MCF 10A (cell line): ENCODE measurements at regions of chr6 and their contacts with region 1.

Region 1: DNA sequence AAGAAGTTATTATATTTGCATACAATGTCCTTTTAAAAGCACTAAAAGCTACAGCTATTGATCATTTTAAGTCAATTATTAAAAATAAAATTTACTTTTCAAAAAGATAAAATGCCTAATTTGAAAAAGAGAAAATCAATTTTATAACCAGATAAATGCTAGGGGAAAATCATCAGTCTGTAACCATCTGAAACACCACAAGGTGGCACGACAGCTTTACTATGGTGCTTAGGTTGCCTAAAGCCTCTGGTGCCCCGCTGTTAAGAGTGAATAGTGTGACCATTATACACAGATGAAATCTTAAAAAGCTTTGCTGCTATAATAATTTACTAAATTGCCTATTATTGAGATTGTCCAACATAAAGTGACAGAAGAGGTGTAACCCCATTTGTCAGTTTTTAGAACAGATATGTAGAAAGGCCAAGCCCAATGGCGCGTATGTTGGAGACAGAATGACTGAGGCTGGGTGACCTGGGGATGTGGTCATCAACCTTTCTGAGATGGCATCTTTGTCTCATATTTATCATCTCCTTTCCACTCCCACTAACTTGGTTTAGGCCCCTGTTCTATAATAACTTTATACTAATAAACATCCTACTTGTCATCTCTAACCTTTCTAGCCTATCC is 100.8 kb downstream of the MOXD1 start:
- DNase-seq: peak; percentile 70
- H3K4me3 Mint-ChIP-seq: no peak overlapping the region
- H3K27ac Mint-ChIP-seq: no peak overlapping the region
- H3K4me1 Mint-ChIP-seq: no peaks in the 10 kb centered on the region
- H3K27me3 Mint-ChIP-seq: no peaks in the 10 kb centered on the region
- CTCF ChIP-seq: peak; percentile 74

Region 2: GRCh38 chr6:131213501-131213990 is 1086.9 kb before region 1 on chr6:
- CTCF ChIA-PET with region 1: no interaction called
- POLR2A ChIA-PET with region 1: no interaction called
- intact Hi-C with region 1: no loop called
- DNase-seq: no peak
- H3K4me3 Mint-ChIP-seq: no peak overlapping the region
- H3K27ac Mint-ChIP-seq: no peak overlapping the region
- H3K4me1 Mint-ChIP-seq: no peaks in the 10 kb centered on the region
- H3K27me3 Mint-ChIP-seq: no peaks in the 10 kb centered on the region
- CTCF ChIP-seq: no peak

Region 3: DNA sequence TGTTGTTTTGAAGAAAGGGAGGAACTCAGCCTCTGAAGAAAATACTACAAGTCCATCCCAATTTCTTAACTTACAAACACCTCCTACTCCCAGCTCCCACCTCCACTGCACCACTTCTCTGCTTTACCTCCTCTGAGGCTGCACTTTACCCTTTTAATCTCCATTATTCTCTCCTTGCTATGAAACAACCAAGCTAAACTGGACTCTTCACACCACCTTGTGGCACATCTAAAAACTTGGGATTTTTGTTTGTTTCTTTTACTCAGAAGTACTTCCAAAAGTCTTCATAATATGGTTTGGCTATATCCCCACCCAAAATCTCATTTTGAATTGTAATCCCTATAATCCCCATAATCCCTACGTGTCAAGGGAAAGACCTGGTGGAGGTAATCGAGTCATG is 41.4 kb before region 1 on chr6:
- CTCF ChIA-PET with region 1: interaction called, 12 read pairs
- POLR2A ChIA-PET with region 1: no interaction called
- intact Hi-C with region 1: no loop called
- DNase-seq: peak; percentile 30
- H3K4me3 Mint-ChIP-seq: no peak overlapping the region
- H3K27ac Mint-ChIP-seq: no peak overlapping the region
- H3K4me1 Mint-ChIP-seq: peaks cover 10% of the 10 kb centered on the region
- H3K27me3 Mint-ChIP-seq: no peaks in the 10 kb centered on the region
- CTCF ChIP-seq: peak; percentile 28

Region 4: GRCh38 chr6:132286026-132287019 is 14.1 kb before region 1 on chr6:
- CTCF ChIA-PET with region 1: interaction called, 357 read pairs
- POLR2A ChIA-PET with region 1: no interaction called
- intact Hi-C with region 1: no loop called
- DNase-seq: peak; percentile 7
- H3K4me3 Mint-ChIP-seq: no peak overlapping the region
- H3K27ac Mint-ChIP-seq: no peak overlapping the region
- H3K4me1 Mint-ChIP-seq: no peaks in the 10 kb centered on the region
- H3K27me3 Mint-ChIP-seq: no peaks in the 10 kb centered on the region
- CTCF ChIP-seq: no peak

Region 5: GRCh38 chr6:132333639-132334520 is 33.4 kb after region 1 on chr6:
- CTCF ChIA-PET with region 1: interaction called, 11 read pairs
- POLR2A ChIA-PET with region 1: no interaction called
- intact Hi-C with region 1: no loop called
- DNase-seq: peak; percentile 87
- H3K4me3 Mint-ChIP-seq: no peak overlapping the region
- H3K27ac Mint-ChIP-seq: peak overlapping the region; percentile 36
- H3K4me1 Mint-ChIP-seq: peaks cover 20% of the 10 kb centered on the region
- H3K27me3 Mint-ChIP-seq: no peaks in the 10 kb centered on the region
- CTCF ChIP-seq: no peak

Region 6: DNA sequence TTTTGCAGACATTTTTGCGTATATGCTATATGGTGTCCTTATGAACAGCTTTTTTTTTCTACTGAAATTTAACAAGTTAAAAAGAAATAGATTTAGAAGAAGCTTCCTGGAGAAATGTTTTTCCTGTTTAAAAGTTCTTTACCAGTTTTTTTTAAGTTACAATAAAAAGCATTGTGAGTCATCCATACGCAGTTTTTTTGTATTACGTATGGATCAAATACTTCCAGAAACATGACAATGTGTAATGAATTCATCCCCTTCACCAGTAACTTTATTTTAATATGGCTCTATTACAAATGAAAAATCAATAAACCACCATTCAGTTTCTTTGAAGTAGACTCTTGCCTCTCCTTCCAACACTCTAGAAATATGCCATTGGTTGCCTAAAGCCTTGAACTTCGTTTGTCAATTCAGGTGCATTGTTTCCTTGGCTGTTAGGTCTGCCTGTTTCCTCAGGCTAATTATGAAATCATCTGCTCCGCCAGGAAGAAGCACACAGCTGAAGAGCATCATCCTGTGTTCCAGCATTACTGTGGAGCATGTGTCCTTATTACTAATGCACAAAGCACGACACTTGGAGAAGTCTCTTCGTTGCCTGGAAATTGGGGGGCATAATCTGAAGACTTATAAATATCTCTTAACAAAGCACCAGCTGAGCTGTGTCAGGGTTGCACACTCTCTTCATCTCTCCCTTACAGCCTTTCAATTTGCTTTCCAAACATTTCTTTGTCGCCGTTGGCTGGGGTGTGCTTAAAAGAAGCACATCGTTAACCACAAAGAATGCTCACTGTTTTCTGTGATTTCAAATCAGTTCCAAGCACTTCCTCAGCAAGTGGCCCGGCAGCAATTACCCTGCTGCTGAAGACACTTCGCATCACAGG is 91.2 kb after region 1 on chr6:
- CTCF ChIA-PET with region 1: interaction called, 28 read pairs
- POLR2A ChIA-PET with region 1: no interaction called
- intact Hi-C with region 1: loop called (anchors 1 kb)
- DNase-seq: peak; percentile 68
- H3K4me3 Mint-ChIP-seq: no peak overlapping the region
- H3K27ac Mint-ChIP-seq: no peak overlapping the region
- H3K4me1 Mint-ChIP-seq: peaks cover 29% of the 10 kb centered on the region
- H3K27me3 Mint-ChIP-seq: no peaks in the 10 kb centered on the region
- CTCF ChIP-seq: no peak

Region 7: DNA sequence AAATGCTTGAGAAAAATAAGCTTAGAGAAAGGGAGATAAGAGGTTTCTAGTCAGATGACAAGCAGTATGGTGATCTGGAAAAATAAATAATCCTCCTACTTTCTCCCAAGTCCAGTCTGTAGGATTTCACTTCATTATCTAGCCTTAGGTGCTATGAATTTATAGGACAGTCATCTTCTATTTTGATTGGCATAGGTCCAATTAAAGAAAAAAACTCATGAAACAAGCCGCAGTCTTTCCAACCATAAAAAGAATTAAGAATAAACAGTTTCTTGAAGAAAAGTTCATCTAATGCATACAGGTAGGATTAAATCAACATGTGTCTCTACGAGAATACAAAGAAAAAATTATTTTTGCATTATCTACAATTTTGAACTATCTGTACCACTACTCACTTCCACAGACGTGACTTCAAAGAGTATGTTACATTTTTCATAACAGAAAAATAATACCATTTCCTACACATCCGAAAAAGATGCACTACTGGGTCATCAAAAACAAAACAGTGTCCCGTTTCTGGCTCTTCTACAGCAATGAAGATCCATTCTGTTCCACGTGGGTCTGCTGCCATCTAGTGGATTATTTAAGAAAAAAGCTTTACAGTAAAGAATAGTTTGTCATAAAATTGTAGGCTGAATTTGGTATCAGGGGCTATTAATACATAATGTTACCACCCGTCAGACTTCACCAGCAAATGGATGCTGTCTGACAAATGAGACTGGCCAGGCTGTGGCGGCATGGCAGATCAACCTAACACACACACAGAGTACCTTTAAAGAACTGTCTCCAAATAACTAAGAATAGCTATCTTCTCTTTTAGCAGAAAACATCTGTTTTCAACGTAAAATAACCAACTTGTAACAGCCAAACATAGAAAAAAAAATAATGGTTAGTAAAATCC is 183.6 kb after region 1 on chr6:
- CTCF ChIA-PET with region 1: interaction called, 139 read pairs
- POLR2A ChIA-PET with region 1: interaction called, 3 read pairs
- intact Hi-C with region 1: loop called (anchors 1 kb)
- DNase-seq: peak; percentile 80
- H3K4me3 Mint-ChIP-seq: no peak overlapping the region
- H3K27ac Mint-ChIP-seq: no peak overlapping the region
- H3K4me1 Mint-ChIP-seq: peaks cover 8% of the 10 kb centered on the region
- H3K27me3 Mint-ChIP-seq: no peaks in the 10 kb centered on the region
- CTCF ChIP-seq: peak; percentile 67

Region 8: GRCh38 chr6:132788658-132789395 is 488.4 kb after region 1 on chr6:
- CTCF ChIA-PET with region 1: no interaction called
- POLR2A ChIA-PET with region 1: no interaction called
- intact Hi-C with region 1: no loop called
- DNase-seq: no peak
- H3K4me3 Mint-ChIP-seq: no peak overlapping the region
- H3K27ac Mint-ChIP-seq: no peak overlapping the region
- H3K4me1 Mint-ChIP-seq: no peaks in the 10 kb centered on the region
- H3K27me3 Mint-ChIP-seq: no peaks in the 10 kb centered on the region
- CTCF ChIP-seq: no peak